Ovary (tissue), 10 donors: ENCODE measurements at regions of chr2 and their contacts with region 1.

Region 1: GRCh38 chr2:239991689-239992314 is 33.3 kb downstream of the NDUFA10 start:
- DNase-seq: no peak
- H3K4me3 ChIP-seq: no peak overlapping the region
- H3K27ac ChIP-seq: no peak overlapping the region
- H3K4me1 ChIP-seq: no peaks in the 10 kb centered on the region
- H3K27me3 ChIP-seq: no peaks in the 10 kb centered on the region
- CTCF ChIP-seq: peak; percentile 52 to 76 (median 71)
- EP300 ChIP-seq: no peak
- POLR2A ChIP-seq: no peak

Region 2: DNA sequence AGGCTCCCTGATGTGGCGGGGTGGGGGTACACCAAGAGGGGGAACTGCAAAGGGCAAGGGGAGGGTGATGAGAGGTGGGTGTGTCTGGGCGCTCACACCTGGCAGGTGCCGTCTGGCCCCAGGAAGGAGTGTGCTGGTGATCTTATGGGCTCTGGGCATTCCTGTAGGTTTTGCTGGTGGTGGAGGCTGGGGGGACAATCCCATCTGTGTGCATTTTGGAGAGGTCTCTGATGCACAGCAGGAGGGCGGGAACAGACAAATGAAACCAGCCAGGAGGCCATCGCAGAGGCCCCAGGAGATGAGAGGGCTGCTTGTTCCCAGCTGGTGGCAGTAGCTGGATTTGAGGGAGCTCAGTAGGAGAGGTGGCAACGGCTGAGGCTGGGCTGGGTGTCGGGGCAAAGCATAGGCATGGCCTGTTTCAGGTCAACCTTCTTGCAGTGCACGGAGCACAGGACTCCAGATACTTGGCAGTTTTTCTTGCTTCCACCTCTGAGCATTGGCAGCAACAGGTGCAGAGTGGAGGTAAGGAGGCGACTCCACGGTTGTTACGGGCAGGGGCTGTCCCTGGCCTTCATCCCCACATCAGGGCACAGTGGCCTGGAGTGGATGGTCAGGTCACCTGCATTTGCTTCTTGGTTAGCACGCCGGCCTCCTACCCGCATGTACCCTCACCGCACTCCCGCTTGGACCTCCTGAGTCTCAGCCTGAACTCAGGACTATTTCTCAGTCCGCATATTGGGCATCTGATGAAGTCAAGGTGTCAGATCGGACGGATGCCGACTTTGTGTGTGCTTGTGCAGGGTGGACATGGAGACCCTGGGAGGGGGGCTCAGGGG is 396.8 kb before region 1 on chr2:
- intact Hi-C with region 1: loop called in 1 of 4 experiments (anchors 5 kb)
- DNase-seq: peak in 2 of 5 donors; percentile 3 to 18
- H3K4me3 ChIP-seq: no peak overlapping the region
- H3K27ac ChIP-seq: no peak overlapping the region
- H3K4me1 ChIP-seq: no peaks in the 10 kb centered on the region
- H3K27me3 ChIP-seq: no peaks in the 10 kb centered on the region
- CTCF ChIP-seq: no peak
- EP300 ChIP-seq: no peak
- POLR2A ChIP-seq: no peak

Region 3: GRCh38 chr2:239934571-239935171 is 57.1 kb before region 1 on chr2:
- intact Hi-C with region 1: loop called in 1 of 4 experiments (anchors 10 kb)
- DNase-seq: peak in 3 of 5 donors; percentile 13 to 44 (median 23)
- H3K4me3 ChIP-seq: no peak overlapping the region
- H3K27ac ChIP-seq: no peak overlapping the region
- H3K4me1 ChIP-seq: no peaks in the 10 kb centered on the region
- H3K27me3 ChIP-seq: no peaks in the 10 kb centered on the region
- CTCF ChIP-seq: peak in 1 of 3 donors; percentile 27
- EP300 ChIP-seq: no peak
- POLR2A ChIP-seq: no peak